HepG2 (cell line): ENCODE measurements at regions of chr16 and their contacts with region 1.

Region 1: DNA sequence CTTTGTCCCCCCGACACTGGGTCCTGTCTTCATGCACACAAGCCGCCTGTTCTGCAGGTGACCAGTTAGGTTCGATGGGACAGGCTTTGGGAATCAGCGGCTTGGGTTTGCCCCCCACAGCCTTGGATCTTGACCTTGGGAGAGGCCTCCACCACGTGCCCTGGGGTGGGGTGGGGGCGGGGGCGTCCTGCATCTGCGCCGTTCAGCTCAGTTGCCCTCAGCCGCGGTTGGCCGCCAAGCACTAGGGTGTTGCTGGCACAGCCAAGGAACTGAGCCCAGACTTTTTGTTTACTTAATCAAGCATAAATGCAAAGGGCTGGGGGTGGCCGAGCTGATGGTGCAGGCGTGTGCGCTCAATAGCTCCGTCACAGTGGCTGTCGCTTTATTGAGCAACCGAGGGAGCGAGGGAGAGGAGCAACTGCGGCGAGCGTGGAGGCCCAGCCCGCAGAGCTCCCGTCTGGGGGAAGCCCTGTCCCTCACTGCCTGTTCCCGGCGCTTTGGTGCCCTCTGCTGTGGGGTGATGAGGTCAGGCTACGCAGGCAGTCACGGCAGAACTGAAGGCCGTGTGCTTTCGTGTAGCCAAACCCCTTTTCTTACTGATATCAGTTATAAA is 33.9 kb downstream of the JPH3 start:
- DNase-seq: peak; percentile 75
- ATAC-seq: peak; percentile 92
- H3K4me3 ChIP-seq: peak overlapping the region; percentile 19 to 62 (median 20); a peak in 1 of 6 replicates
- H3K27ac ChIP-seq: no peak overlapping the region
- H3K4me1 ChIP-seq: peaks cover 11% of the 10 kb centered on the region; the same call in 1 of the 2 replicates
- H3K27me3 ChIP-seq: peaks cover 27 to 92% of the 10 kb centered on the region in 2 experiments; a peak in 4 of 5 replicates
- CTCF ChIP-seq: peak; percentile 93
- EP300 ChIP-seq: no peak
- POLR2A ChIP-seq: no peak
- RAD21 ChIP-seq: peak; percentile 91

Region 2: GRCh38 chr16:87416826-87417527 is 219.2 kb before region 1 on chr16:
- CTCF ChIA-PET with region 1: interaction called, 11 read pairs
- POLR2A ChIA-PET with region 1: no interaction called
- in situ Hi-C with region 1: no loop called
- intact Hi-C with region 1: loop called (anchors 1 kb)
- DNase-seq: peak; percentile 29
- ATAC-seq: no peak
- H3K4me3 ChIP-seq: no peak overlapping the region
- H3K27ac ChIP-seq: no peak overlapping the region
- H3K4me1 ChIP-seq: no peaks in the 10 kb centered on the region
- H3K27me3 ChIP-seq: no peaks in the 10 kb centered on the region
- CTCF ChIP-seq: peak; percentile 26; the same call in 1 of the 2 replicates
- EP300 ChIP-seq: no peak
- POLR2A ChIP-seq: no peak
- RAD21 ChIP-seq: no peak

Region 3: GRCh38 chr16:87583453-87584131 is 52.6 kb before region 1 on chr16:
- CTCF ChIA-PET with region 1: interaction called, 53 read pairs
- POLR2A ChIA-PET with region 1: no interaction called
- in situ Hi-C with region 1: loop called (anchors 5 kb)
- intact Hi-C with region 1: loop called (anchors 1 kb)
- DNase-seq: no peak
- ATAC-seq: no peak
- H3K4me3 ChIP-seq: no peak overlapping the region
- H3K27ac ChIP-seq: no peak overlapping the region
- H3K4me1 ChIP-seq: peaks cover 20% of the 10 kb centered on the region
- H3K27me3 ChIP-seq: peaks cover 27 to 80% of the 10 kb centered on the region in 2 experiments
- CTCF ChIP-seq: no peak
- EP300 ChIP-seq: no peak
- POLR2A ChIP-seq: no peak
- RAD21 ChIP-seq: no peak

Region 4: GRCh38 chr16:87598431-87598830 is 37.7 kb before region 1 on chr16:
- CTCF ChIA-PET with region 1: no interaction called
- POLR2A ChIA-PET with region 1: no interaction called
- in situ Hi-C with region 1: no loop called
- intact Hi-C with region 1: no loop called
- DNase-seq: no peak
- ATAC-seq: no peak
- H3K4me3 ChIP-seq: no peak overlapping the region
- H3K27ac ChIP-seq: no peak overlapping the region
- H3K4me1 ChIP-seq: no peaks in the 10 kb centered on the region
- H3K27me3 ChIP-seq: peaks cover 28 to 66% of the 10 kb centered on the region in 2 experiments
- CTCF ChIP-seq: no peak
- EP300 ChIP-seq: no peak
- POLR2A ChIP-seq: no peak
- RAD21 ChIP-seq: no peak